ENCODE measurements at regions of chr1 and their contacts with region 1.

Region 1: DNA sequence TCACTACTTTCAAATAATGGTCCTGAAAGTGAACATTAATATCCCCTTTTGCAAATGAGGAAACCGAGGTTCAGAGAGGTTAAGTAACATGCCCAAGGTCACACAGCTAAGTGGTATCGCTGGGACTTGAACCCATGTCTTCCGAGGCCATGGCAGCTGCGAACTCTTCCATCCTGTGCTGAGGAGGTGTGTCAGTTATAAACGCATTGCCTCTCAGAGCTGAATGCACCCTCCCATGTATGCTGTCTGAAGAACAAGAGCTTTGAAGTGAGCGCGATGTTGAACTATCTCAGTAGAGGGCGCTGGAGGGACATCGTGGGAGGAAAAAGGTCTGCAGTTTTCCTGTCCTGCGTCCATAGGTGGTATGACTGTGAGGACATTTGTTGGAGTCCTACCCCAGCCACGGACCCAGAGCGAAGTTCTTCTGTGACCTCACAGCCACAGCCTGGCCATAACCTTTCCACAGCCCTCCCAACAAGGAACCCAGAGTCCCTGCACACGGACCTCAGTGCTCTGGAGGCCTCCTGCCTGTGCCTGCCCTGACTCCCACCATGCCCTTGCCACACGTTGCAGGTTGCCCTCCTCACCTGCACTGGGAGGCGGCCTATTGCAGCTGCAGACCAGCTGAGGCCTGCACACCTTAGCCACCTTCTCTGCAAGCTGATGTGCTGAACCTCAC is 7.5 kb downstream of the MYOC start:
- DNase-seq: peak; percentile 84
- H3K4me3 Mint-ChIP-seq: no peak overlapping the region
- H3K27ac Mint-ChIP-seq: no peak overlapping the region
- H3K4me1 Mint-ChIP-seq: peaks cover 4% of the 10 kb centered on the region
- H3K27me3 Mint-ChIP-seq: peaks cover 30% of the 10 kb centered on the region

Region 2: DNA sequence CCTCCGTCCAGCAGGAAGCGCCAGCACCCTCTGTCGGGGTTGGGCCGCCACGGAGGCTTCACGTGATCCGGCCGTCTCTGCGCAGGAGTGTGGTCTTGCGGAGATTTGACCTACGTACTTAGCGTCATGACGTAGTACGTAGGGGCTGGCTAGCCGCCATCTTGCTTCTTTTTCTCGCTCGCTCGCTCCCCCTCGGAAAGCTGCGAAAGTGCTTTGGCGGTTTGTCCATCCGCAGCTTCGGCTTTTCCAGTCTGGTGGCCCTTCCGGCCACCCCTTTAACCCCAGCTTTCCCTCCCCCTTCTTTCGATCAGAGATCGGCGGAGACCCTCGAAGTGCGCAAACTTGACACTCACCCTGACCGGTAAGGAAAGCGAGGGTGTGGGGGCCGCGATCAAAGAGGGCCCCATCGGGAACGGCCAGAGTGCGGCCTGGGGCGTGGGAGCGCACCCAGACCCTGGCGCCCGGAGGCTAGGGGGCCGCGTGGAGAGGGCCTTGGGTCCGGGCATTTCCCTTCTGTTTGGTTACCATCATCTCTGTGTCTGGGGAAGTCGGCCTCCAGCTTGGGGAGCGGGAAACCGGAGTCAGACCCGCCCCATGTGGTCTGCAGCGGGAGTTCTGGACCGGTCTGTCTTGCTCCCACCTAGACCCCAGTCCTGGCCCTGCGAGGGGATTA is 159.4 kb before region 1 on chr1 and contains the start of gene PRRC2C:
- CTCF ChIA-PET with region 1: interaction called, 13 read pairs
- DNase-seq: peak; percentile 96
- H3K4me3 Mint-ChIP-seq: peak within 1 kb of the TSS; percentile 95
- H3K27ac Mint-ChIP-seq: peak within 1 kb of the TSS; percentile 100
- H3K4me1 Mint-ChIP-seq: peaks cover 51% of the 10 kb centered on the region
- H3K27me3 Mint-ChIP-seq: no peaks in the 10 kb centered on the region

Region 3: GRCh38 chr1:171501305-171502024 is 143.5 kb before region 1 on chr1:
- CTCF ChIA-PET with region 1: no interaction called
- DNase-seq: no peak
- H3K4me3 Mint-ChIP-seq: no peak overlapping the region
- H3K27ac Mint-ChIP-seq: no peak overlapping the region
- H3K4me1 Mint-ChIP-seq: peaks cover 68% of the 10 kb centered on the region
- H3K27me3 Mint-ChIP-seq: no peaks in the 10 kb centered on the region

Region 4: GRCh38 chr1:171595324-171595723 is 49.6 kb before region 1 on chr1:
- CTCF ChIA-PET with region 1: no interaction called
- DNase-seq: no peak
- H3K4me3 Mint-ChIP-seq: no peak overlapping the region
- H3K27ac Mint-ChIP-seq: no peak overlapping the region
- H3K4me1 Mint-ChIP-seq: no peaks in the 10 kb centered on the region
- H3K27me3 Mint-ChIP-seq: no peaks in the 10 kb centered on the region

Region 5: GRCh38 chr1:171715813-171716251 is 70.9 kb after region 1 on chr1:
- CTCF ChIA-PET with region 1: interaction called, 12 read pairs
- DNase-seq: no peak
- H3K4me3 Mint-ChIP-seq: no peak overlapping the region
- H3K27ac Mint-ChIP-seq: no peak overlapping the region
- H3K4me1 Mint-ChIP-seq: no peaks in the 10 kb centered on the region
- H3K27me3 Mint-ChIP-seq: no peaks in the 10 kb centered on the region

Region 6: GRCh38 chr1:171784784-171785183 is 139.8 kb after region 1 on chr1:
- CTCF ChIA-PET with region 1: interaction called, 11 read pairs
- DNase-seq: peak; percentile 27
- H3K4me3 Mint-ChIP-seq: peak overlapping the region; percentile 62
- H3K27ac Mint-ChIP-seq: peak overlapping the region; percentile 89
- H3K4me1 Mint-ChIP-seq: peaks cover 65% of the 10 kb centered on the region
- H3K27me3 Mint-ChIP-seq: no peaks in the 10 kb centered on the region

Region 7: DNA sequence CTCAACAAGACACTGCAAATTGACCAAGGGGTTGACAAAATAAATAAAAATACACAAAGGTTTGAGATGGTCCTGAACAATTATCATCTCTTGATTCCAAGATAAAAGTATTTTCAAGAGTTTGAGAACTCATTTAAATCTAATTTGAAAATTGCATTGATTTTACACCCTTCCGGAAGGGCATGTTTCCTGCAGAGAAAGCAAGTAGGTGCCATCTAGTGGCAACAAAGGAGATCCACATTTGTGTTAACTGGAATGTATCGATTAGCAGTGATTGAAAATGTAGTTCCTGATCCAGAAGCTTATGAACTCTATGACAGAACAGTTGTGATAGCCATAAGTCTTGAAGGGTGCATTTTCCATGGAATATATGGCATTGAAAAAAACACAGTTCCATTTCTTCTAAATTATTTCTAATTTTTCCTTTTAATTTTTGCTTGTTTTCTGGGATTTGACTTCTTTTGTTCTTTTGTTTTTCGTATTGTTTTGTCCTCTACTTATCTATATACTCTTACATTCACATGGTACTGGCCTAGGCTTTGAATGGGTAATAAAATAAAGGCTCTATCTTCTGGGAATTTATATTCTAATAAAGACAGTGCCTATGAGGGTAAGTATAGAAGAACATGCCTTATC is 340.0 kb after region 1 on chr1:
- CTCF ChIA-PET with region 1: interaction called, 89 read pairs
- DNase-seq: no peak
- H3K4me3 Mint-ChIP-seq: no peak overlapping the region
- H3K27ac Mint-ChIP-seq: no peak overlapping the region
- H3K4me1 Mint-ChIP-seq: no peaks in the 10 kb centered on the region
- H3K27me3 Mint-ChIP-seq: no peaks in the 10 kb centered on the region

Region 8: DNA sequence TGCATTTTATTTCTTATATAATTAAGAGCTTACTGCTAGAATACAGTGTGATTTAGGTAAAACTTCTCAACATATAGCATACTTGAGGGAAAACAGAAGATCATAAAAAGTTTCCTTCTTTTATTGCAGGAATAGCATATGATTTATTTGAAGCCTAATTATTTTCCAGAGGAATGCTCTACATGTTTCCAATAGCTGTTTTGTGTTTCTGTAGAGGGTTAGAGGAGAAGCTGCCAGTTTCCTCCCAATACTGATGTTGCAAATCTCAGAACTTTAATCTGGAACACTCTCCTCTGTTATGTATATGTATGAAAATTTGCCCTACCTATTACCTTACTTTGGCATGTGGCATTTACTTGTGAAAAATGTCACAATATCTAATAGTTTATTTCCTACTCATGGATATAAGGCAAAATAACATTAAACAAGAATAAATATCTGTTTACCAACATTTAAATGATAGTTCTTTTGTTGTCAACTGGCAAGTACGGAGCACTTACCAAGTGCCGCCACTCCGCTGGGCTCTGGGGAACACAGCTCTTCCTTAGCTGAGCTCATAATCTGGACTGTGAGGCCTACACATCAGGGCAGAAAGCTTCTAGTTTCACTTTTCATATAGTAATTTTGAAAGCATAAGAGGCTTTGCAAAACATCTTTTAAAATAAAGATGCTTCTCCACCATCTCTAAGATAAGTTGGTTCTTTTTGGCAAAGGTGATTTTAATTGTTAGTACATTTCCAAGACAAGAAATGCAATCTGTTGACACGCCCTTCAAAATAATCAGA is 535.7 kb after region 1 on chr1:
- CTCF ChIA-PET with region 1: no interaction called
- DNase-seq: peak; percentile 66
- H3K4me3 Mint-ChIP-seq: peak overlapping the region; percentile 58
- H3K27ac Mint-ChIP-seq: peak overlapping the region; percentile 98
- H3K4me1 Mint-ChIP-seq: peaks cover 49% of the 10 kb centered on the region
- H3K27me3 Mint-ChIP-seq: no peaks in the 10 kb centered on the region